ENCODE measurements at regions of chr11 and their contacts with region 1.

Region 1: GRCh38 chr11:57249384-57250319 is 12.6 kb upstream of the APLNR start:
- DNase-seq: peak; percentile 69 to 89 (median 85)
- ATAC-seq: peak; percentile 63 to 65
- H3K4me3 ChIP-seq: no peak overlapping the region
- H3K27ac ChIP-seq: peak overlapping the region; percentile 13
- H3K4me1 ChIP-seq: peaks cover 2% of the 10 kb centered on the region
- H3K27me3 ChIP-seq: no peaks in the 10 kb centered on the region

Region 2: GRCh38 chr11:56841210-56841810 is 408.3 kb before region 1 on chr11:
- intact Hi-C with region 1: loop called (anchors 2 to 5 kb)
- DNase-seq: peak in 2 of 3 donors; percentile 17 to 61
- ATAC-seq: peak; percentile 60 to 64
- H3K4me3 ChIP-seq: no peak overlapping the region
- H3K27ac ChIP-seq: no peak overlapping the region
- H3K4me1 ChIP-seq: no peaks in the 10 kb centered on the region
- H3K27me3 ChIP-seq: no peaks in the 10 kb centered on the region

Region 3: DNA sequence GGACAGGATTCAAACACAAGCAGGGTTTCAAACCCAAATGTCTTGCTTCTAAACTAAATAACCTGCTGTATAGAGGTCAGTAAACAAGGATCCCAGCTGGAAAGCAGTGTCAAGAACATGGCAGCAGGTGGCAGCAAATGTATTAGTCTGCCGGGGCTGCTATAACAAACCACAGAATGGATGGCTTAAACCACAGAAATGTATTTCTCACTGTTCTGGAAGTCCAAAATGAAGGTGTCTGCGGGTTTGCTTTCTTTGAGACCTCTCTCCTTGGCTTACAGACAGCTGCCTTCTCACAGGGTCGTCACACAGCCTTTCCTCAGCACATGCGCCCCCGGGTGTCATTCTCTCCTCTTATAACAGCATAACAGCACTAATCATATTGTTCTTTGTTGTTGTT is 133.0 kb before region 1 on chr11:
- intact Hi-C with region 1: loop called in 2 of 4 experiments (anchors 5 kb)
- DNase-seq: peak in 1 of 3 donors; percentile 68
- ATAC-seq: peak; percentile 36 to 56
- H3K4me3 ChIP-seq: no peak overlapping the region
- H3K27ac ChIP-seq: no peak overlapping the region
- H3K4me1 ChIP-seq: no peaks in the 10 kb centered on the region
- H3K27me3 ChIP-seq: no peaks in the 10 kb centered on the region

Region 4: DNA sequence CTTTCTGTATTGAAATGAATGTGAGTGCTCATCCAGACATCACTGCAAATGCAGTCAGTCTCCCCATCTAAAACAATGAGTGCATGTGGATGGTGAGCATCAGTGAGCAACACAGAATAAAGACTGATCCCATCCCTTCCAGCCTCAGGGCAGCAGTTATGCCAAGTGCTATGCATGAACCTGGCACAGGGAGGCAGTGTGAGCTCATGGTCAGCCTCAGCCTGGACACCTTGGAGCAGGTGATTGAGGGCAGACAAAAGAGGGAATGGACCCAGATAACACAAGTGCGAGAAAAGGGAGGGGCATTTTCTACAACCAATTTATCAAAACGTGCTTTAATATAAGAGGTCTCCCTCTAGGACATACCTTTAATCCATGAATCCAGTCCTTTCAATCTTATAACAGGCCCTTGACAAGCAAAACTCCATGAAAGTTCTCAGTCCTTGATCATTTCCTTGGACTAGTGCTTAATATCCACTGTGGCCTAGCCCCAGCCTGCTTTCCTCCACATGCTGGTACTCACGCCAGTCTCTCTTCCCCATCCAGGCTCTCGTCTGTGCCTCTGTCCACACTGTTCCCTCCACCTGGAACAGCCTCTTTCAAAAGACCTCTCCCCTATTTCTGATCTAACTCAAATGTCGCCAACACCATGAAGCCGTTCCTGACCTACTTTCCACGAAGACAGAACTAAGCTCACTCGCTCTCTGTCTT is 118.4 kb before region 1 on chr11:
- intact Hi-C with region 1: loop called (anchors 2 to 5 kb)
- DNase-seq: peak; percentile 27 to 63 (median 63)
- ATAC-seq: peak; percentile 77
- H3K4me3 ChIP-seq: no peak overlapping the region
- H3K27ac ChIP-seq: no peak overlapping the region
- H3K4me1 ChIP-seq: no peaks in the 10 kb centered on the region
- H3K27me3 ChIP-seq: no peaks in the 10 kb centered on the region

Region 5: DNA sequence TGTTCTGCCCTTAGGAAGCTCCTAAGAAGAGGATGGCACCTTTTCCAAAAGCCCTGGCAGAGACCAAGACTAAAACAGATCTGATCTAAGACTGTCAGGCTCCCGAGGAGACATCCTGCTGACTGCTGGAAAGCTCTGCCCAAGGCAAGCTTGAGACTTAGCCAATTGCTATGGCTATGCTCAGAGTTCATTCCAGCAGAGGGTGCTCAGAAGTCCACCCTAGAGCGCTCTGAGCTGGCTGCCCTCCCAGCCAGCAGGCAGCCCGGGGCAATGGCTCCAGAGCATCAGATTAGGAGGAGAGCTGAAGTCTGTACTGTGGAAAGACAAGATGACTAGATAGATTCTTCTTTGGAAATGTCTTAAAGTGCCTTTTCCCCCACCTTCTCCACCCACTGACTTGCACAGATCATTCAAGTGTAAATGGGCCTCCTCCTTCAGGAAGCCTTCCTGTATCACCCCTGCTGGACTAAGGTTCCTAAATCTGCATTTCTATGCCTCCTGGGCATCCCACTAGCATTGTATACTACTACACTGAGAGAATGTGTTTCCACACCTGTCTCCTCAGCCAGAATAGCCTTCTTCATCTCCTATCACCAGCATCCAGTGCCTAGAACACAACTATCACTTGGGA is 44.5 kb before region 1 on chr11:
- intact Hi-C with region 1: loop called in 1 of 4 experiments (anchors 5 kb)
- DNase-seq: peak; percentile 49 to 80 (median 70)
- ATAC-seq: peak; percentile 53 to 54
- H3K4me3 ChIP-seq: no peak overlapping the region
- H3K27ac ChIP-seq: no peak overlapping the region
- H3K4me1 ChIP-seq: peaks cover 16% of the 10 kb centered on the region
- H3K27me3 ChIP-seq: no peaks in the 10 kb centered on the region

Region 6: GRCh38 chr11:58301576-58301975 is 1051.9 kb after region 1 on chr11:
- intact Hi-C with region 1: no loop called
- DNase-seq: no peak
- ATAC-seq: no peak
- H3K4me3 ChIP-seq: no peak overlapping the region
- H3K27ac ChIP-seq: no peak overlapping the region
- H3K4me1 ChIP-seq: no peaks in the 10 kb centered on the region
- H3K27me3 ChIP-seq: no peaks in the 10 kb centered on the region

Measured in right cardiac atrium (tissue), 5 donors.